Heart left ventricle (tissue), 16 donors: ENCODE measurements at regions of chr2 and their contacts with region 1.

Region 1: DNA sequence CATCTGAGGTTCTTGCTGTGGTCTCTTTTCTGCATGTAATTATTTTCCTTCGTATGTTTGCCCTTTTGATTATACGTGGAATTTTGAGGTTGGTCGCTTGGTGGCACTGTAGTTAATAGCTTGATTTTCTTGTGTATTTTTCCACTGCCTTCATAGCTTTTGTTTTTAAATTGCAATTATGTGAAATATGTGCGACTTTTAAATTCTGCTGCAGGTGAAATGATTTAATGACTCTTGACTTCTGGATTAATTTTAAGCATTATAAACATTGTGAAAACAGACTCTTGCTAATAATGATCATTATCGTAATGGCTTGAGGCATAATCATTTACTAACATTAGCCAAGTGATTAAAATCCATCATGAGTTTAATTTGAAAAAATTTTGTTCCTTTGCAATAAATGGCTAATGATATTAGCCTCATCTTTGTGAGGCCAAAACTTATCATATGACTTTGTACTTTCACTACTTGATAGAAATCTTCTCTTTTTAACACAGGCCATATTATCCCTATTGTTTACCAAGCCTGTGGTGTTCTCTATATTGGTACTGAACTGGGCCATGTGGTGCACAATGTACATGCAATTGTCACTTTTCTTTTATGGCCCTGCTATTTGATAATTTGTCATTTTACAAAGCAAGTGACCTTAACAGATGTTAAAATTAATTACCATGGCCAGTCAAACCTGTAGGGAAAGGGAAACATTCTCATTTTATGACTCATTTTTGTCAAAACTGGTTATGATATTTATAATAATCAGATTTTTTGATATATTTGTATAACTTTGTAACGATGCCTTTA is 62.8 kb upstream of the NEUROD1 start:
- DNase-seq: peak in 2 of 5 donors; percentile 18 to 26
- ATAC-seq: peak in 1 of 4 donors; percentile 52
- H3K4me3 ChIP-seq: no peak overlapping the region
- H3K27ac ChIP-seq: no peak overlapping the region
- H3K4me1 ChIP-seq: peaks cover 0 to 6% (median 0%) of the 10 kb centered on the region in 12 donors
- H3K27me3 ChIP-seq: no peaks in the 10 kb centered on the region
- CTCF ChIP-seq: peak; percentile 47 to 82 (median 66)
- POLR2A ChIP-seq: no peak

Region 2: GRCh38 chr2:181886192-181886591 is 143.1 kb after region 1 on chr2:
- intact Hi-C with region 1: loop called in 1 of 10 experiments (anchors 5 kb)
- DNase-seq: no peak
- ATAC-seq: no peak
- H3K4me3 ChIP-seq: no peak overlapping the region
- H3K27ac ChIP-seq: no peak overlapping the region
- H3K4me1 ChIP-seq: peaks cover 0 to 18% (median 6%) of the 10 kb centered on the region in 12 donors
- H3K27me3 ChIP-seq: no peaks in the 10 kb centered on the region
- CTCF ChIP-seq: no peak
- POLR2A ChIP-seq: no peak

Region 3: GRCh38 chr2:181891258-181891965 is 148.3 kb after region 1 on chr2 and contains the start of gene ITPRID2:
- intact Hi-C with region 1: loop called in 1 of 10 experiments (anchors 2 kb)
- DNase-seq: peak; percentile 90 to 94 (median 92)
- ATAC-seq: peak; percentile 85 to 98 (median 94)
- H3K4me3 ChIP-seq: peak within 1 kb of the TSS; percentile 71 to 94 (median 86)
- H3K27ac ChIP-seq: peak within 1 kb of the TSS; percentile 94 to 98 (median 98)
- H3K4me1 ChIP-seq: peaks cover 7 to 50% (median 36%) of the 10 kb centered on the region in 12 donors
- H3K27me3 ChIP-seq: no peaks in the 10 kb centered on the region
- CTCF ChIP-seq: peak in 8 of 12 donors; percentile 16 to 41 (median 22)
- POLR2A ChIP-seq: peak in 1 of 2 donors; percentile 27
- total RNA-seq, gene ITPRID2: 37.8 to 85.9 (median 59.8) TPM

Region 4: GRCh38 chr2:181904022-181904632 is 161.0 kb after region 1 on chr2:
- intact Hi-C with region 1: loop called (anchors 2 to 5 kb)
- DNase-seq: no peak
- ATAC-seq: peak in 1 of 4 donors; percentile 56
- H3K4me3 ChIP-seq: peak overlapping the region in 1 of 12 donors; percentile 10
- H3K27ac ChIP-seq: no peak overlapping the region
- H3K4me1 ChIP-seq: peaks cover 0 to 56% (median 28%) of the 10 kb centered on the region in 12 donors
- H3K27me3 ChIP-seq: no peaks in the 10 kb centered on the region
- CTCF ChIP-seq: peak; percentile 43 to 75 (median 59)
- POLR2A ChIP-seq: no peak

Region 5: DNA sequence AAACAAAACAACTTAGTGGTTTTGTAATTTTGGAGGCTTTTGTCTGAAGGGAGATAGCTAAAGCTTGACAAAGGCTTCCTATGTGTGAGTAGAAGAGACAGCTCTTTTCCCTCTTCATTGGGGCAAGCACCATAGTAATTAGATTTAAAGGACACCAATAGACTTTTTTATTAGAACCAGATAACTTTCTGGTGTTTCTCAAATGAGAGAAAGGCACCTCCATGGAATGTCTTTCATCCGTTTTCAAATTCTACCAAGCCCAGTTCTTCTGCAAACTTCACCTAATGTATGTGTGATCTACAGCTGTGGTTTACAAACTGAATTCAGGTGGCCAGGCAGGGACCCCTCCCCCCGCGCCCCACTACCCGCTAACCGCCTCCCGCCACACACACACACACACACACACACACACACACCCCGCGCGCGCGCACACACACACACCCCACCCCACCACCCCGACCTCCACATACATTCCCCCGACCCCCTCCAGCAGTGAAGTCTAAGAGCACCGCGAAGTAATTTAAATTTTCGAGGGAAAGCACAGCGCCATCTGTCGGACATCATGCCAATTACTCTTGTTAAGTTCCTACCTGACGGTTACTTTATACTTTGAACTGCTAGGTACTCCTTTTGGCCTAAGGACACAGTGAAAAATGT is 210.9 kb after region 1 on chr2:
- intact Hi-C with region 1: loop called (anchors 1 to 10 kb)
- DNase-seq: peak; percentile 15 to 56 (median 43)
- ATAC-seq: peak in 3 of 4 donors; percentile 32 to 59 (median 45)
- H3K4me3 ChIP-seq: peak overlapping the region in 8 of 12 donors; percentile 4 to 48 (median 25)
- H3K27ac ChIP-seq: no peak overlapping the region
- H3K4me1 ChIP-seq: peaks cover 0 to 13% (median 0%) of the 10 kb centered on the region in 12 donors
- H3K27me3 ChIP-seq: no peaks in the 10 kb centered on the region
- CTCF ChIP-seq: peak; percentile 51 to 69 (median 62)
- POLR2A ChIP-seq: no peak

Region 6: GRCh38 chr2:182191061-182191460 is 447.9 kb after region 1 on chr2:
- intact Hi-C with region 1: no loop called
- DNase-seq: no peak
- ATAC-seq: no peak
- H3K4me3 ChIP-seq: no peak overlapping the region
- H3K27ac ChIP-seq: no peak overlapping the region
- H3K4me1 ChIP-seq: peaks cover 0 to 12% (median 4%) of the 10 kb centered on the region in 12 donors
- H3K27me3 ChIP-seq: no peaks in the 10 kb centered on the region
- CTCF ChIP-seq: no peak
- POLR2A ChIP-seq: no peak

Region 7: DNA sequence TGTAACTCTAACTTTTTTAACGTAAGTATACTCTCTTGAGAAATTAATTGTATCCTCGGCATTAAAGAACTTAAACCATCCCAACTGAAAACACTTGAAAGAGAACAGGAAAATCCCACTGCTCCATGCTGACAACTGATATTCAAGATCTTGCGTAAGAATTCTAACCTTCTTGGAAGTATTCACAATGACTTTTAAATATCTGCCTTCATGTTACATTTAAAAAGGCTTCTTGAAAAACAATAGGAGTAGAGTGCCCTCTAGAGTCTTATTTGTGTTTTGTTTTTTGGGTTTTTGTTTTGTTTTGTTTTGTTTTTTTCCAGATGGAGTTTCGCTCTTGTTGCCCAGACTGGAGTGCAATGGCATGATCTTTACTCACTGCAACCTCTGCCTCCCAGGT is 907.6 kb after region 1 on chr2:
- intact Hi-C with region 1: loop called in 3 of 10 experiments (anchors 5 to 10 kb)
- DNase-seq: no peak
- ATAC-seq: peak in 2 of 4 donors; percentile 53 to 70
- H3K4me3 ChIP-seq: no peak overlapping the region
- H3K27ac ChIP-seq: no peak overlapping the region
- H3K4me1 ChIP-seq: peaks cover 0 to 14% (median 0%) of the 10 kb centered on the region in 12 donors
- H3K27me3 ChIP-seq: no peaks in the 10 kb centered on the region
- CTCF ChIP-seq: peak; percentile 37 to 68 (median 57)
- POLR2A ChIP-seq: no peak

Region 8: DNA sequence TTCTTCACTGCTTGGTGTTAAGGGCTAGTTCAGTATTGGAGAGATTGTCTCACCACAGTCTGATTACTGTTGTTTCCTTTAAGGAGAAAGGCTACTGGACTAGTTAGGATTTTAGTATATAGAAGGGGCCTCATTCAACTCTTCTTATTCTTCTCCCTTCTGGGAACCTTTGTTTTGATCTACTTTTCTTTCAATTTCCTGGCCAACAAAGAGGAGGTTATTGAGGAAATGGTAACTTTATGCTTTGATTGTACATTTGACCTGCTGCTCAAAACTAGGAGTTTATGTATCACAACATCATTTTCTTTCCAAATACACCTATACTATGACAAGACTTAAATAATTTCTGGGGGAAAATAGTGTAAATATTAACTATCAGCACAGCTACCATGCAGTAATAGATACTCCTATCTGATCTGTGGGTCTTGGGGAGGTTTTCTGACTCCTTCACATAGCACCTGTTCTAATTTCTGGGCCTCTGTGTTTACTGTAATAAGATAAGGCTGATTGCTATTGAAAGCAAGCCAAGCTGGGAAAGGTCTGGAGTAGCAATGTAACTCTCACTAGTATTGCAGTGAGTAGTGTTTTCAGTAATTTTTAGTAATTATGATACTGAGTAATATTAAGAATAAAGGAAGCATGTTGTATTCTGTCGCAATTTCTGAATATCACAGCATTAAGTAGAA is 1776.4 kb after region 1 on chr2:
- intact Hi-C with region 1: no loop called
- DNase-seq: no peak
- ATAC-seq: no peak
- H3K4me3 ChIP-seq: no peak overlapping the region
- H3K27ac ChIP-seq: no peak overlapping the region
- H3K4me1 ChIP-seq: no peaks in the 10 kb centered on the region
- H3K27me3 ChIP-seq: no peaks in the 10 kb centered on the region
- CTCF ChIP-seq: no peak
- POLR2A ChIP-seq: no peak